ENCODE measurements at regions of chr7 and their contacts with region 1.

Region 1: GRCh38 chr7:98434095-98434494 is 33.2 kb upstream of the BAIAP2L1 start:
- H3K4me3 Mint-ChIP-seq: no peak overlapping the region
- H3K27ac Mint-ChIP-seq: no peak overlapping the region
- H3K4me1 Mint-ChIP-seq: peaks cover 6% of the 10 kb centered on the region
- H3K27me3 Mint-ChIP-seq: peaks cover 14% of the 10 kb centered on the region

Region 2: GRCh38 chr7:98745722-98746318 is 311.7 kb after region 1 on chr7:
- intact Hi-C with region 1: loop called (anchors 10 kb)
- H3K4me3 Mint-ChIP-seq: no peak overlapping the region
- H3K27ac Mint-ChIP-seq: no peak overlapping the region
- H3K4me1 Mint-ChIP-seq: no peaks in the 10 kb centered on the region
- H3K27me3 Mint-ChIP-seq: peaks cover 13% of the 10 kb centered on the region